Activated CD8-positive, alpha-beta T cell treated with anti-CD3 and anti-CD28 coated beads, Interleukin-2, amount 10 ng/mL, durations not matched to agents 7 days and 5 days (primary cell): ENCODE measurements at regions of chr3 and their contacts with region 1.

Region 1: DNA sequence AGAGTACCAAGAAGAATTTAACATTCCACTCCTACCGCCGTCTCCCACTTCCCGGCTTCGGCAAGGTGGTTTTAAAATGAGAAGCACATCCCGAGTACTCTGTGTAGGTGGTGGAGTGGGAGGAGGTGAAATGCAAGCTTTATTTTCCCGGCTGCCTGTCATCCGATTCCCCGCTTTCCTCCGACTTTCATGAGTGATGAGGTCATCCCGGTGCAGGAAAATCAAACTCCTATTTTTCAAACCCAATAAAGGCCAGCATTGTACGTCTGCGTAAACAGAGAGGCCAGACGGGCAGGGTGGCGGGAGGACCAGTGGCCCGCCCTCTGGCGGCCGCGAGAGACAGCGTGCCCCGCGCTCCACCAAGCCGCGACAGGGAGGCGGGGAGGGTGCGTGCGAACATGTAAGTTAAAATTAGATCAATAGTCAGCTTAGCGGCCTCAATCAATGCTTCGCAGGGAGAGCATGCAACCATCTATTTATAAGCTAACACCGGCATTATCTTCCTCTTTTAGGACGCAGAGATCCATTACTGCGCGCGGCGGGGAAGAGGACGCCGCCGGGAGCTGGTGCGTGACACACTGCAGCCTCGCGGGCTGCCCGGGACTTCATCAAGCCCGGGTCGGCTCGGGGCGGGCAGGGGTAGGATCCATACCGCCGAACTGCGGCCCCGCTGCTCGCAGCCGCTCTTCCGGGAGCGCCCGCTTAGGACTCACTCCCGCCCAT is 163.3 kb downstream of the CD47 start:
- DNase-seq: peak; percentile 77
- ATAC-seq: peak; percentile 99
- H3K4me3 Mint-ChIP-seq: peak overlapping the region; percentile 78
- H3K27ac Mint-ChIP-seq: no peak overlapping the region
- H3K4me1 Mint-ChIP-seq: peaks cover 13% of the 10 kb centered on the region
- H3K27me3 Mint-ChIP-seq: peaks cover 10% of the 10 kb centered on the region

Region 2: GRCh38 chr3:107524841-107525643 is 402.5 kb before region 1 on chr3:
- CTCF ChIA-PET with region 1: no interaction called
- POLR2A ChIA-PET with region 1: no interaction called
- DNase-seq: peak; percentile 33
- ATAC-seq: peak; percentile 9
- H3K4me3 Mint-ChIP-seq: peak overlapping the region; percentile 94
- H3K27ac Mint-ChIP-seq: peak overlapping the region; percentile 87
- H3K4me1 Mint-ChIP-seq: peaks cover 26% of the 10 kb centered on the region
- H3K27me3 Mint-ChIP-seq: peaks cover 2% of the 10 kb centered on the region

Region 3: DNA sequence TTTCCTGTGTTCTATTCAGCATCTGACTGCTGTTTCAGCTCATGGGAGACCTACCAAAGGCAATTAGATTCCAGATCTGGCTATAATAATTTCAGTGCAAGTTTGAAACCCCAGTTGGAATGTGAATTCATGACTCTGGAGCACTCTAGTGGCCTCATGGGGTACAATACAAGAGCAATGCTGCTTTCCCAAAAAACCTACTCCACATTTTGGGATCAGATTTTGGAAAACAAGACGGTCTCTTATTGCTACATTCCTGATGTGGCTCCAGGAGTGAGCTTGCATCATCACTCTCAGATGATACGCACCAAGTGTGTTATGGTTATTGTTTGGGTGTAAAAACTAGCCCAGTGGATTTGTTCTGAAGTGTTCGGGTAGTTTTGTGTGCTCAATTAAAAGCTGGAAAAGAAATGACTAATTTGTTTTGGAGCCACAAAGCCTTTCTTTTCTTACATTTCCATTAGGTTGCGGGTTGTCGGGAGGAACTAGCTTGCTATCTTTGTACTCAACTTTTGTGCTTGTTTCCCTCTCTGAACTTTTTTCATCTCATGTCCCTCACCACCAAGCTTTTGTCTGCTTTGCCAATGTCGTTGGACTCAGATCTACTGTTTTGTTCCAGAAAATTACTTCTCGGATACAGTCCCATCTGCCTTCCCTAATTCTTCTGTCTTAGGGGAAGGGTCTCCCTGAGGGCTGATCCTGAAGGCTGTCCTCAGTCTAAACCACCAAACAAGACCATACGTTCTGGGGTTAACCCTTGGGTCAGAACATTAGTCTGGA is 132.7 kb before region 1 on chr3:
- CTCF ChIA-PET with region 1: no interaction called
- POLR2A ChIA-PET with region 1: no interaction called
- DNase-seq: no peak
- ATAC-seq: no peak
- H3K4me3 Mint-ChIP-seq: no peak overlapping the region
- H3K27ac Mint-ChIP-seq: no peak overlapping the region
- H3K4me1 Mint-ChIP-seq: peaks cover 6% of the 10 kb centered on the region
- H3K27me3 Mint-ChIP-seq: no peaks in the 10 kb centered on the region

Region 4: GRCh38 chr3:107841831-107842230 is 85.7 kb before region 1 on chr3:
- CTCF ChIA-PET with region 1: no interaction called
- POLR2A ChIA-PET with region 1: no interaction called
- DNase-seq: no peak
- ATAC-seq: no peak
- H3K4me3 Mint-ChIP-seq: no peak overlapping the region
- H3K27ac Mint-ChIP-seq: no peak overlapping the region
- H3K4me1 Mint-ChIP-seq: no peaks in the 10 kb centered on the region
- H3K27me3 Mint-ChIP-seq: peaks cover 2% of the 10 kb centered on the region

Region 5: GRCh38 chr3:107910713-107911259 is 16.7 kb before region 1 on chr3:
- CTCF ChIA-PET with region 1: interaction called, 18 read pairs
- POLR2A ChIA-PET with region 1: interaction called, 5 read pairs
- DNase-seq: no peak
- ATAC-seq: peak; percentile 60
- H3K4me3 Mint-ChIP-seq: no peak overlapping the region
- H3K27ac Mint-ChIP-seq: no peak overlapping the region
- H3K4me1 Mint-ChIP-seq: peaks cover 15% of the 10 kb centered on the region
- H3K27me3 Mint-ChIP-seq: peaks cover 2% of the 10 kb centered on the region

Region 6: GRCh38 chr3:107938143-107938542 is 10.6 kb after region 1 on chr3:
- CTCF ChIA-PET with region 1: interaction called, 23 read pairs
- POLR2A ChIA-PET with region 1: interaction called, 4 read pairs
- DNase-seq: peak; percentile 31
- ATAC-seq: no peak
- H3K4me3 Mint-ChIP-seq: no peak overlapping the region
- H3K27ac Mint-ChIP-seq: no peak overlapping the region
- H3K4me1 Mint-ChIP-seq: peaks cover 17% of the 10 kb centered on the region
- H3K27me3 Mint-ChIP-seq: no peaks in the 10 kb centered on the region

Region 7: GRCh38 chr3:107981471-107982111 is 54.1 kb after region 1 on chr3:
- CTCF ChIA-PET with region 1: interaction called, 19 read pairs
- POLR2A ChIA-PET with region 1: interaction called, 3 read pairs
- DNase-seq: no peak
- ATAC-seq: no peak
- H3K4me3 Mint-ChIP-seq: no peak overlapping the region
- H3K27ac Mint-ChIP-seq: no peak overlapping the region
- H3K4me1 Mint-ChIP-seq: peaks cover 63% of the 10 kb centered on the region
- H3K27me3 Mint-ChIP-seq: no peaks in the 10 kb centered on the region

Region 8: DNA sequence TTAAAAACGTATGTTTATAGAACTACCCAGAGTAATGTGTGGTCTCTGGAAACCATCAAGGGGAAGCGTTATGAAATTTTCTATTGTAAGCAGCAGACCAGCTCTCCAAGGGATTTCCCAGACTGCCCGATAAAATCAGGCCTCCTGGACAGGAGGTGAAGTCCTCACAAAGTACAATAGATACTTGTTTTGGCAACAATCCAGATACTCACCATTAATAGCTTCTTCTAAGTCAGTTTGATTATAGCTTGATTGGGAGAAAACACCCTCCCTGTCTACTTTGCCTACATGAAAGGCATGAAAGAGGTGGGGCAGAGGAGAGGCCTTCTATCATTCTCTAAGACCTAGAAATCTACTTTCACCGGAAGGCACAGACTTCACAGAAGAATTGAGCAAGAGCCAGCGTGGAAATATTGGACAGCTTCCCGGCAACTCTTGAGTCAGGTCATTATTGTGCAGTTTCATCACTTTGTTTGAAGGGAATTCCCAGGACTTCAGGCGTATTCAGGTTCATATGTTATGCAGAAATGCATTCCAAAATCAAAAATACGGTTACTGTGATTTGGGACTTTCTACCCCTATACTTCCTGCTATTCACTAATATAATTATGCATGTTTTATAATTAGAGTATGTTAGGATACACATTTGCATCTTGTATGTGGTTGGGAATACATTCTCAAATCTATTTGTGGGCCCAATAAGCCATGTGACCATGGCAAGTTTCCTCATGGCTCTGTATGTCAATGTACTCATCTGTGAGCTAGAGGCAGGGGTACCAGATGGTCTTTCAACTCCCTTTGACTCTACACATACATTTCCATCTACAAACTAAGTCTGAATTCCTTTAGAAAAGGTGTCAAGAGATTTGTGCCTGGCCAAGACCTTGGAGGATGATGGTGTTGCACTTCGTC is 59.8 kb after region 1 on chr3:
- CTCF ChIA-PET with region 1: interaction called, 19 read pairs
- POLR2A ChIA-PET with region 1: interaction called, 3 read pairs
- DNase-seq: no peak
- ATAC-seq: no peak
- H3K4me3 Mint-ChIP-seq: no peak overlapping the region
- H3K27ac Mint-ChIP-seq: no peak overlapping the region
- H3K4me1 Mint-ChIP-seq: peaks cover 38% of the 10 kb centered on the region
- H3K27me3 Mint-ChIP-seq: no peaks in the 10 kb centered on the region

Region 9: GRCh38 chr3:108044699-108045098 is 117.2 kb after region 1 on chr3:
- CTCF ChIA-PET with region 1: interaction called, 11 read pairs
- POLR2A ChIA-PET with region 1: no interaction called
- DNase-seq: no peak
- ATAC-seq: no peak
- H3K4me3 Mint-ChIP-seq: no peak overlapping the region
- H3K27ac Mint-ChIP-seq: no peak overlapping the region
- H3K4me1 Mint-ChIP-seq: peaks cover 17% of the 10 kb centered on the region
- H3K27me3 Mint-ChIP-seq: no peaks in the 10 kb centered on the region